ENCODE measurements at regions of chr3 and their contacts with region 1.

Region 1: DNA sequence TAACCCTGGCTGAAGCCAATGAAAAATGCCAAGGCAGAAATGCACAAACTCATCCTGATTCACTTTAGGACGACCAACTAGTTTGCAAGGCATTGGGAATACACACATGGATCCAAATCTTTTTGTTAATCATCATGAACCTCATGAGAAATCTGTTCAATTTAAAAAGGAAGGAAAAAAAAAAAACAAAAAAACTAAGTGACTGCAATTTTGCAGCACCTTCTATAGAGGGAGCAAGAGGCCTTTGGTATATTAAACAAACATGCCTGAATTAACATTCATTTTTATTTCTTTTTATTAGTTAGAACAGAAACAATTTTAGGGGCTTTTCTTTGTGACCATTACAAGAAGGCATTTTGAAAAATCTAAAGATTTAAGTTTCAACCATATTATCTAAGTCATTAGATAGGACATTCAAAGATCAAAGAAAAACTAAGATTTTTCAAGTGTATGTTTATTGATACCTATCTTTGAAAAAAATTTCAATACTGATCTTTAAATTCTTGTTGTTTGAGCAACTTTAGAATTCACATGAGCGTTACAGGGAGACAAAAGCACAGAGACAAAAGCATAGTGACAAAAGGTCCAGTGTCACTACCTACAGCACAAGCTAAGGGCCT is 182.4 kb downstream of the CBLB start:
- DNase-seq: no peak
- ATAC-seq: peak in 3 of 4 donors; percentile 65 to 71 (median 67)
- H3K4me3 ChIP-seq: no peak overlapping the region
- H3K27ac ChIP-seq: no peak overlapping the region
- H3K4me1 ChIP-seq: peaks cover 0 to 9% (median 3%) of the 10 kb centered on the region in 3 donors
- H3K27me3 ChIP-seq: no peaks in the 10 kb centered on the region
- CTCF ChIP-seq: peak; percentile 12 to 49 (median 45)

Region 2: DNA sequence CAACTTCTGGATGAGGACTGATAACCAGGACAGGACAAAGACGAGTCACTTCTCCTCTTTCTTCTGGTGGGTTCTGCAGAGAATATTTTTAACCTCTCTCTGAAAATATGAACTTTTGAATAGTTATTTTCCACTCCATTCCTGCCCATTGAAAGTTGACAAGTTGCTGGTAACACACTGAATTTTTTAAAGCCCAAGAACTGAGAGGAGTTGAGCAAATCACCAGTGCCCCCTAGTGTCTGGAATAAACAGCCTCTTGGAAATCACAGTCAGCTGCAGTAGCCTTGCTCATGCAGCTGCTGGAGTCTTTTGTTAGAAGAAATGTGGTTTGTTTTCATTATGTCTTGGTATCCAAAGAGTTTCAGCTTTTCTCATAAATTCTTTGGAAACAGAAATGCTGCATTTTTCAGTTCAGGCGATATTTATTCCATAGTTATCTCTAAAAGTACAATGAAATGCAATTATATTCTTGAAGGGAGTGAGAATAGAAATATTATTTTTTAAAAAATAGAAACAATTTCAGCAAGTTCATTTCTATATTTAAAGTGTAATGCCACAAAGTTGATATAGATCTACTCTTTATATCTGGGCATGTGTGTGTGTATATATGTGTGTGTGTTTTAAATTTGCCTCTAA is 923.4 kb after region 1 on chr3:
- intact Hi-C with region 1: loop called in 1 of 3 experiments (anchors 10 kb)
- DNase-seq: peak in 3 of 6 donors; percentile 27 to 58 (median 29)
- ATAC-seq: peak in 3 of 4 donors; percentile 92 to 93 (median 92)
- H3K4me3 ChIP-seq: no peak overlapping the region
- H3K27ac ChIP-seq: no peak overlapping the region
- H3K4me1 ChIP-seq: no peaks in the 10 kb centered on the region
- H3K27me3 ChIP-seq: no peaks in the 10 kb centered on the region
- CTCF ChIP-seq: peak; percentile 33 to 87 (median 74)

Measured in pancreas (tissue), 10 donors.